Right ventricle myocardium superior (tissue), 1 donor: ENCODE measurements at regions of chr1 and their contacts with region 1.

Region 1: GRCh38 chr1:18597160-18598042 is 33.2 kb upstream of the PAX7 start:
- DNase-seq: peak; percentile 69
- ATAC-seq: peak; percentile 83

Region 2: DNA sequence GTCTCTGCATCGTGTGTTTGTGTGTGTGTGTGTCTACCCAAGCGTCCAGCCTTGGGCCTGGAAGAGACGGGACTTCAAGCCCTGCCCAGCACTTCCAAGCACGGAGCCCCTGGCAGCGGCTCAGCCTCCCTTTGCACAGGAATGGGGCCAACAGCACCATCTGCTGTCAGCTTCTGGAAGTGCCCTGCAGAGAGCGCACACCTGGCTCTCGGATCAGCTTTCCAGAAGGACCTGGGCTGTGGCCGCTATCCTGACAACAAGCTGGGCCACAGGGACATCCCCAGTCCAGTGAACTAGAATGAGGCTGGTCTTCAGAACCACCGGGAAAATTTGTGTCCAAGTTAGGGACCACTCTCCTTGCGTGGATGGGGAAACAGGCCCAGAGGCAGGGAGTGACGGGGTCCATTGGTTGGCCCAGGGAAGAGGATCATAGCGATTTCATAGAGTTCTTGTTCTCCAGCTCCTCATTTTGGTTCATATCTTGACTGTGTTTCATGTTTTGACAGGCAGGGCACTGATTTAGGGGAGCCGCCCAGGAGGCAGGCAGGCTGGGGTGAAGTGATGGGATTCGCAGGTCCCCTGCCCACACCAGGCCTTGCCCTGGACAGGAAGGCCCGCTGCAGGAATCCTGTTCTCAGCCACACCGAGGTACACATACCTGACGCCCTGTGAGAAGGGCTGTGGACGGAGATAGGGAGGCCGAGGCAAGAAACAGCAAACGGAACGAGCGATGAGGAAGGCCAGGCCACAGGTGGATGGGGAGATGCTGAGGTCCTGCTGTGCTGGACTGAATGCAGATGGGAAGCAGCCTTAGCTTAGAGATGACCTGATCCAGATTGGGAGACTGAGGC is 223.6 kb after region 1 on chr1:
- intact Hi-C with region 1: loop called (anchors 2 kb)
- DNase-seq: peak; percentile 84
- ATAC-seq: peak; percentile 91